Sciatic nerve (tissue), 2 donors: ENCODE measurements at regions of chr18 and their contacts with region 1.

Region 1: GRCh38 chr18:74196220-74197119 is 48.1 kb downstream of the TIMM21 start:
- DNase-seq: no peak
- ATAC-seq: peak; percentile 84

Region 2: GRCh38 chr18:73626859-73627258 is 569.6 kb before region 1 on chr18:
- intact Hi-C with region 1: no loop called
- DNase-seq: no peak
- ATAC-seq: no peak

Region 3: DNA sequence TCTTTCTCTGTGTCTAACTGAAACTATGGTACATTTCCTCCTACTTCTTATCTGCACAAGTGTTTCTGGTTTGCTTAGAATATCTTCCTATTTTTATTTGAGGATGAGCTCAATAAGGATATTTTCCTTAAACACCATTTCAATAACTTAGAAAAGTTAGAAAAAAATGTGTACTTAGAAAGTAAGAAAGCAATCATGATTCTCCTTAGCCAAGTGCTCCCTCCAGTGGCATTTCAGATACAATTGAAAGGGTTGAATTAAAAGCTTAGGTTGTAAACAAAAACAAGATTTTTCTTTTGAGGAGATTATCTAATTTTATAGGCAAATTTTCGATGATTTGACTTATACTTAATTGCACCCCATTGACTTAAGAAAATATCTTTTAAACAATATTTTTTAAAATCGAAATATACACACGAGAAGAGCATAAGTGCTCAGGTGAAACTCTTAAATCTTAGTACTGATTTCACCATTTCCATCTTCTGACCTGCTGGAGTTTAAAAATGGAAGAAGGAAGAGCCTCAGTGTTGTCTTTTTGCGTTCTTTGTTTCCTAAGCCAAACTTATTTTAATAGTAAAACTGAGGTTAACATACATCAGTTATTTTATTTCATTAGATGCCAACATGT is 146.1 kb after region 1 on chr18:
- intact Hi-C with region 1: loop called (anchors 5 kb)
- DNase-seq: no peak
- ATAC-seq: peak; percentile 59

Region 4: DNA sequence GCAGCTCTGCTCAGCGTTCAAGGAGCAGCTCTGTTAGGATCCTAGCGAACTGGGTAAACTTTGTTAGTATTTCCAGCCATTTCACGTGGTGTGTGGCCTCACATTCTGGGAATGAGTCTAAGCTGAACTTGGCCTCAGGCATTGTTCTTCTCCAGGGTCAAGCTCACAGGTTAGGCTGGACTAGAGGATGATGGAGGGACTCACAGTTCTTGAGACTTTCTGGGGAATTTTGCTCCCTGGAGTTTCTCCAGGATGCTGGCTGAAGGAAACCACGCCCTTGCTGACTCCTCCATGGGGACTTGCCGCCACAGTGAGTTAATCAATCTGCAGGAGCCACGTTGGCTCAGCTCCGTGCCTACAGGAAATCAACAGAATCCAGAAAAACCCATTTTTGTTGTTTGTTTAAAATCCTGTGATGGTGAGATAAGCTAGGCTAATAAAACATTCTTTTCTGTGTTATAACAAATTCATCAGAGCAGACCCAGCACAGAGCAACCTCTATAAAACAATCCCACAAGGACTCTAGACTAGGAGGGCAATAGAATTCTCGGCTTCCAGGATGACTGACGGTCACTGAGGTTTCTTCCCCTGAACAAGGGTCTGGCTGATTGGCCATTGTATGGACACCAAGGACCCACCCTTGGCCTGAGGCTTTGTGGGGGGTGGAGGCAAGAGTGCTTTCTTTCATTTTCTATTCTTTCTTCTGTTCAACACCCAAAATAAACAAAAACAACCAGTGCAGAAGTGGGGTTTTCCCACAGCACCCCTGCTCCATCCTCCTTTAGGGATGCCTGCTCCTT is 350.5 kb after region 1 on chr18:
- intact Hi-C with region 1: loop called (anchors 10 kb)
- DNase-seq: no peak
- ATAC-seq: peak; percentile 76

Region 5: GRCh38 chr18:74562131-74562730 is 365.8 kb after region 1 on chr18:
- intact Hi-C with region 1: no loop called
- DNase-seq: no peak
- ATAC-seq: no peak